Left lung (tissue), 14 donors: ENCODE measurements at regions of chr1 and their contacts with region 1.

Region 1: DNA sequence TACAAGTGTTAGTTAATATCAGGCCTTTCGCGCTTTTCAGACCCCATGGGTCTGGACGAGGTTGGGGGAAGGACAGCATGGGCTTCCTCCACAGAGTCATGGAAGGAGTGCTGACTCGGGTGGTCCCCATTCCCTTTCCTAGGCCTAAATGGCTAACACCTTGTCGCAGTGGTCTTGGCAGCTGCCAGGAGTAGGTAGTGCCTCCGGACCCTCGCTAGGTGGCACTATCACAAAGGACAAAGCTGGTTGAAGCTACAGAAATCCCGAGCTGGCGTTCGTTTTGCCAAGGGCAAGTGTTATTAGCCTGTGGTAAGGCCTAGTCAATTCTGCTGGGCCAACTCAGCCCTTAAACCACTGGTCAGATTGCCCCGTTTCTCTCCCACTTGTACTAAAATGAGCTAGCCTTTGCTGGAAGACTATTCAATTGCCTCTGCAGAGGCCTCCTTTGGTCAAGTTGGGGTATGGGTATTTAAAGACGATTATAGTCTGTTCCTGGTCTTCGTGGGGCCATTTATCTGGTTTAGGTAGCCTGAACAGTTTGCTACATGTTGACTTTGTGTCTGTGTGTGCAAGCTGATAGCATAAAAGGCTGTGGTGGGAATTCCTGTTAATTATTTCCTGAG is 1.1 kb upstream of the UBE2Q1 start:
- DNase-seq: peak; percentile 83 to 92 (median 88)
- ATAC-seq: peak; percentile 86
- H3K4me3 ChIP-seq: peak overlapping the region; percentile 41 to 92
- H3K27ac ChIP-seq: peak overlapping the region; percentile 88 to 93
- H3K4me1 ChIP-seq: peaks cover 5 to 29% of the 10 kb centered on the region in 2 donors
- H3K27me3 ChIP-seq: no peaks in the 10 kb centered on the region
- CTCF ChIP-seq: peak; percentile 95 to 96

Region 2: GRCh38 chr1:154870115-154870571 is 310.6 kb after region 1 on chr1 and contains the start of gene KCNN3:
- intact Hi-C with region 1: loop called in 1 of 2 experiments (anchors 10 kb)
- DNase-seq: peak; percentile 85 to 96 (median 92)
- ATAC-seq: peak; percentile 99
- H3K4me3 ChIP-seq: peak within 1 kb of the TSS; percentile 12 to 22
- H3K27ac ChIP-seq: no peak within 1 kb of the TSS
- H3K4me1 ChIP-seq: peaks cover 13 to 28% of the 10 kb centered on the region in 2 donors
- H3K27me3 ChIP-seq: peaks cover 6 to 44% of the 10 kb centered on the region in 2 donors
- CTCF ChIP-seq: no peak
- polyA plus RNA-seq, gene KCNN3: 2.0 to 3.1 (median 2.3) TPM